ENCODE measurements at regions of chr5 and their contacts with region 1.

Region 1: DNA sequence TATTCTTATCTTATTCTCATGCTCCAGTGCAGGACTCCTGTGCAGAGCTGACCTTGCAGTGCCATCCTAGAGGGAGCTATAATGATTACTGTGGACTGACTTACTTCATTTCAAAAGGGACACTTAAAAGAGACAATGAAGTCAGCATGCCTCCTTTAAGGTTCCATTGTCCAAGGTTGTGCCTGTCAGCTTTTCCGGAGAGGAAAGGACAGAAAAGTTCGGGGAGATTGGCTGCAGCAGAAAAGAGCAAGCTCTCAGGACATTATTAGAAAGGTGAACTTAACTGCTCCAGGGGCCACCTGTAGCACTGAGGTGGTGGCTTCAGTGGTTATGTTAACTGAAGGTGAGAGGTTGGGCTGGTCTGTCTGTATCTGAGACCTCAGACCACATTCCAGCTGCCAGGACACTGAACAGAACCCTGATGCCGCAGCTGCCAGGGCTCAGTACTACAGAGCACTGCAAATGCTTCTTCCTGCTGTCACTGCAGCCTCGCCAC is 112.9 kb downstream of the ST8SIA4 start:
- DNase-seq: no peak
- H3K4me3 ChIP-seq: no peak overlapping the region
- H3K27ac ChIP-seq: no peak overlapping the region
- H3K4me1 ChIP-seq: no peaks in the 10 kb centered on the region
- H3K27me3 ChIP-seq: no peaks in the 10 kb centered on the region
- CTCF ChIP-seq: no peak
- POLR2A ChIP-seq: no peak

Region 2: GRCh38 chr5:100889165-100889743 is 99.0 kb after region 1 on chr5:
- intact Hi-C with region 1: loop called (anchors 5 kb)
- DNase-seq: no peak
- H3K4me3 ChIP-seq: peak overlapping the region in 2 of 3 donors; percentile 1 to 5
- H3K27ac ChIP-seq: no peak overlapping the region
- H3K4me1 ChIP-seq: no peaks in the 10 kb centered on the region
- H3K27me3 ChIP-seq: no peaks in the 10 kb centered on the region
- CTCF ChIP-seq: no peak
- POLR2A ChIP-seq: no peak

Region 3: DNA sequence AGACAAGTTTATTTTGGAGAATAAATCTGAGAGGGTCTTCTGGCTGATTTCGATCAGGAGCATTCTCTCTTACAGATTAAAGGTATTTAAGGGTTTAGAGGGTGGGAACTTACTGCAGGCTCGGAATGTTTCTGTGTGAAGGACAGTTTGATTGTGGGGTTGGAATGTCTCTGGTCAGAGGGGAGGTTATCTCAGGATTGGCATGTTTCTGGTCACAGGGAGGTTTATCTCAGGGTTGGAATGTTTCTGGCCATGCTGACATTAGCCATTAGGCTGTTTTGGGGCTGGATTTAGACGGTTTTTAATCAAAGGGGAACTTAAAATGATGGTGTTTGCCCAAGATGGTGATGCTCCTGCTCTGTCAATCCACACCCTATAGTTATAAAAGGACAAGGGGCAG is 1410.6 kb after region 1 on chr5:
- intact Hi-C with region 1: loop called (anchors 10 kb)
- DNase-seq: no peak
- H3K4me3 ChIP-seq: no peak overlapping the region
- H3K27ac ChIP-seq: no peak overlapping the region
- H3K4me1 ChIP-seq: no peaks in the 10 kb centered on the region
- H3K27me3 ChIP-seq: no peaks in the 10 kb centered on the region
- CTCF ChIP-seq: no peak
- POLR2A ChIP-seq: no peak

Measured in breast epithelium (tissue), 4 donors.